Sigmoid colon (tissue), 7 donors: ENCODE measurements at regions of chr16 and their contacts with region 1.

Region 1: DNA sequence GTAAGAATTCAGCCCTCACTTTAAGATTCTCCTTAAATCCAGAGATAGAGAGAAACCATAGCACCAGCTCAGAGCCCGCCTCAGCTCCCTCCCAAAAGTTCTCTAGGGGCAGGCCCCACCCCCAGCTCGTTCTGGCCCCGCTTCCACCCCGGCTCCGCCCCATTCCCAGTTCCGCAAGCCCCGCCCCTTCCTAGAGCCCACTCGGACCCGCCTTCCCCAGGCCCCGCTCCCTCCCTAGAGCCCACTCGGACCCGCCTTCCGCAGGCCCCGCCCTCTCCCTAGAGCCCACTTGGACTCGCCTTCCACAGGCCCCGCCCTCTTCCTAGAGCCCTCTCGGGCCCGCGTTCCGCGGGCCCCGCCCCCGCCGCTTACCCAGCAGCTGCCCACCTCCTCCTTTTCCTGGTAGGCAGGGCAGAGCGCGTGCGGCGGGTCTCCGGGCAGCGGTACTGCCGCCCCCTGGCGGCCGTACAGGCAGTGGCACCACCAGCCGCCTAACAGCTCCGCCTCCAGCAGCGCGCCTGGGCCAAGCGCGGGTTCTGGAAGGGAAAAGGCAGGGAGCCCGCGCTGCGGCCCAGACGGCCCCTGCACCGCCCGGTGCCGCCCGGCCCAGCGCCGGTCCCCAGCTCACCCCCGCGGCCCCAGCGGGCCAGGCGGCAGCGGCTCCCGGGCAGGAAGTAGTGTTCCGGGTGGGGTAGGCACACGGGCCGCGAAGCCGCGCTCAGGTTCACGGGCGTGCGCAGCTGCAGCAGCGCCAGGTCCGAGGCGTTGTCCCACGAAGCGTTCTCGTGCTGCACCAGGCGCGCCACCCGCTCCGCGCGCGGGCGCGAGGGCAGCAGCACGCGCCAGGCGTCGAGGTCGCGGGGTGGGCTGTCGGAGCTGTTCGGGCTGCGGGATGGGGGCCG is 6.8 kb upstream of the PRSS8 start:
- DNase-seq: peak; percentile 99
- H3K4me3 ChIP-seq: peak overlapping the region; percentile 4 to 59 (median 49)
- H3K27ac ChIP-seq: peak overlapping the region; percentile 79 to 83 (median 80)
- H3K4me1 ChIP-seq: peaks cover 0 to 20% (median 17%) of the 10 kb centered on the region in 4 donors
- H3K27me3 ChIP-seq: peaks cover 0 to 12% (median 0%) of the 10 kb centered on the region in 3 donors
- CTCF ChIP-seq: peak; percentile 84 to 97 (median 92)
- EP300 ChIP-seq: peak in 1 of 4 donors; percentile 36
- POLR2A ChIP-seq: no peak

Region 2: DNA sequence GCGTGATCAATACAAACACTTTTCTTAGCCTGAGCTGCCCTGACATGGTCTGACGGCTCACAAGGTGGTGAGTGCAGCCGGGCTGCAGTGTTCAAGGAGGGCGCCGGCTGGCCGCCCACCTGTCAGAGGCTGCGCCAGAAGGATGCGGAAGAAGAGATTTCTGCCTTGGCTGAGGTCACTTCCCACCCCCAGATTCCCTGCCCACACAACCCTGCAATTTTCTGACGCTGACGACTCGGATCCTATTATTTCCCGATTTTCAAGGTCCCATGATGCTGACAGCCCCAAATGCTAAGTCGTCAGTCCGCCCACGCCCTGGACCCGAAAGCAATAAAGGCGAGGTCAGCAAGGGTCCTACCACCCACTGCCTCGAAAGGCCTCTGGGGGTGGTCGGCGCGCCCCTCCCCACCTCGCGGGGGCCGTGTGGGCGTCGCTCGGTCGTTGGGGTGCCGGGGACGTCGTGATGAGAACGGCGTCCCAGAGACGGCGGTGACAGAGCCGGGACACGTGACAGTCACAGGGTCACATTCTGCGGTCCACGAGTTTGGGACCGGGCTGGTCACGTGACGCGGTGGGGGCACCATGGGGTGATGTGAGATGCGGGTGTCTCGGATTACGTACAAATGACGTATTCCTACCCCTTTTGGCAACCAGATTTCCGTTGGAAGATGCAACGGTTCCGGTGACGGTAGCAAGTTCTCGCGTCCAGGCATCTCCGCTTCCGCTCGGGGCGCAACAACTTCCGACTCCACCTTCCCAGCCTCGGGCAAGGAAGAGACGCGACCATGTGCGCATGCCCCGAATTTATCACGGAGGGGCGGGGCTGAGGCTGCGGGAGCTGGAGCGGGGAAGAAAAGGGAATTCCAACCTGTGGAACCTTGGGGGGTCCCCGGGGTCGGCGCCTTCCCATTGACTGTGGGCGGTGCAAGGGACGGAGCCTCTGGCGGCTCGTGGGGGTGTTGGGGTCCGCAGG is 109.3 kb before region 1 on chr16 and contains the start of gene STX4:
- intact Hi-C with region 1: loop called (anchors 2 kb)
- DNase-seq: peak; percentile 99
- H3K4me3 ChIP-seq: peak within 1 kb of the TSS; percentile 79 to 98 (median 96)
- H3K27ac ChIP-seq: peak within 1 kb of the TSS; percentile 87 to 98 (median 94)
- H3K4me1 ChIP-seq: peaks cover 0 to 29% (median 18%) of the 10 kb centered on the region in 4 donors
- H3K27me3 ChIP-seq: no peaks in the 10 kb centered on the region
- CTCF ChIP-seq: no peak
- EP300 ChIP-seq: peak in 2 of 4 donors; percentile 74 to 86
- POLR2A ChIP-seq: peak in 1 of 2 donors; percentile 44
- total RNA-seq, gene STX4: 23.9 to 56.5 (median 37.4) TPM

Region 3: GRCh38 chr16:31108035-31108793 is 34.1 kb before region 1 on chr16 and contains the start of gene BCKDK:
- intact Hi-C with region 1: loop called (anchors 5 kb)
- DNase-seq: peak; percentile 88
- H3K4me3 ChIP-seq: peak within 1 kb of the TSS; percentile 86 to 97 (median 86)
- H3K27ac ChIP-seq: peak within 1 kb of the TSS; percentile 88 to 89 (median 89)
- H3K4me1 ChIP-seq: peaks cover 0 to 32% (median 27%) of the 10 kb centered on the region in 4 donors
- H3K27me3 ChIP-seq: no peaks in the 10 kb centered on the region
- CTCF ChIP-seq: no peak
- EP300 ChIP-seq: no peak
- POLR2A ChIP-seq: peak; percentile 29 to 42
- total RNA-seq, gene BCKDK: 29.5 to 42.7 (median 33.7) TPM

Region 4: GRCh38 chr16:31179747-31180459 is 37.5 kb after region 1 on chr16 and contains the start of gene FUS:
- intact Hi-C with region 1: loop called (anchors 1 kb)
- DNase-seq: peak; percentile 96
- H3K4me3 ChIP-seq: peak within 1 kb of the TSS; percentile 77 to 94 (median 92)
- H3K27ac ChIP-seq: peak within 1 kb of the TSS; percentile 93 to 99 (median 98)
- H3K4me1 ChIP-seq: peaks cover 0 to 42% (median 40%) of the 10 kb centered on the region in 4 donors
- H3K27me3 ChIP-seq: no peaks in the 10 kb centered on the region
- CTCF ChIP-seq: no peak
- EP300 ChIP-seq: no peak
- POLR2A ChIP-seq: peak; percentile 97
- total RNA-seq, gene FUS: 44.1 to 63.9 (median 60.4) TPM

Region 5: GRCh38 chr16:31191697-31192428 is 49.5 kb after region 1 on chr16:
- intact Hi-C with region 1: no loop called
- DNase-seq: no peak
- H3K4me3 ChIP-seq: no peak overlapping the region
- H3K27ac ChIP-seq: no peak overlapping the region
- H3K4me1 ChIP-seq: peaks cover 0 to 2% (median under 1%) of the 10 kb centered on the region in 4 donors
- H3K27me3 ChIP-seq: no peaks in the 10 kb centered on the region
- CTCF ChIP-seq: no peak
- EP300 ChIP-seq: no peak
- POLR2A ChIP-seq: no peak